ENCODE measurements at regions of chr6 and their contacts with region 1.

Region 1: DNA sequence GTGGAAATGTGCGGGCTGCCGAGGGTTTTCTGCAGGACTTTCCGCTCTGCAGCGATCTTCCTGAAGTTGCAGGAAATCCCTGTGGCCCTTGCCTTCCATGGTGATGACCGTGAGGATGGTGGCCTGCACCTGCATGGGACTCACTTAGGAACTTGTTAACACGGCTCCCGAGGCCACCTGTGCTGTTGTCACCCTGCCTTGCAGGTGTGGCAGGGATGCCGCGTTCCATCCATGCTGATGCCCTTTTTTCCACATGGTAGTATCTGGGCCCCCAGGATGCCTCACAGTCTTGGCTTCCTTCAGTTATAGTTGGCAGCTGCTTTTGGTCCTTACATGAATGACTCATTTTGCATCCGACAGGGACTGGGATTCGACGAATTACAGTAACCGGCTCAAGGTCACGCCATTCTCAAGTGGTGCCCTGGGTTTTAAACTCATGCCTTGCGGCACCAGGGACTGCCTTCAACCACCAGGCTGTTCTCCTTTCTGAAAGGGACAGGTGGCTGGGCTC is 37.2 kb downstream of the SYNJ2 start:
- DNase-seq: peak in 1 of 2 donors; percentile 73
- ATAC-seq: peak; percentile 33
- H3K4me3 ChIP-seq: no peak overlapping the region
- H3K27ac ChIP-seq: peak overlapping the region; percentile 20 to 22
- H3K4me1 ChIP-seq: no peaks in the 10 kb centered on the region
- H3K27me3 ChIP-seq: no peaks in the 10 kb centered on the region

Region 2: DNA sequence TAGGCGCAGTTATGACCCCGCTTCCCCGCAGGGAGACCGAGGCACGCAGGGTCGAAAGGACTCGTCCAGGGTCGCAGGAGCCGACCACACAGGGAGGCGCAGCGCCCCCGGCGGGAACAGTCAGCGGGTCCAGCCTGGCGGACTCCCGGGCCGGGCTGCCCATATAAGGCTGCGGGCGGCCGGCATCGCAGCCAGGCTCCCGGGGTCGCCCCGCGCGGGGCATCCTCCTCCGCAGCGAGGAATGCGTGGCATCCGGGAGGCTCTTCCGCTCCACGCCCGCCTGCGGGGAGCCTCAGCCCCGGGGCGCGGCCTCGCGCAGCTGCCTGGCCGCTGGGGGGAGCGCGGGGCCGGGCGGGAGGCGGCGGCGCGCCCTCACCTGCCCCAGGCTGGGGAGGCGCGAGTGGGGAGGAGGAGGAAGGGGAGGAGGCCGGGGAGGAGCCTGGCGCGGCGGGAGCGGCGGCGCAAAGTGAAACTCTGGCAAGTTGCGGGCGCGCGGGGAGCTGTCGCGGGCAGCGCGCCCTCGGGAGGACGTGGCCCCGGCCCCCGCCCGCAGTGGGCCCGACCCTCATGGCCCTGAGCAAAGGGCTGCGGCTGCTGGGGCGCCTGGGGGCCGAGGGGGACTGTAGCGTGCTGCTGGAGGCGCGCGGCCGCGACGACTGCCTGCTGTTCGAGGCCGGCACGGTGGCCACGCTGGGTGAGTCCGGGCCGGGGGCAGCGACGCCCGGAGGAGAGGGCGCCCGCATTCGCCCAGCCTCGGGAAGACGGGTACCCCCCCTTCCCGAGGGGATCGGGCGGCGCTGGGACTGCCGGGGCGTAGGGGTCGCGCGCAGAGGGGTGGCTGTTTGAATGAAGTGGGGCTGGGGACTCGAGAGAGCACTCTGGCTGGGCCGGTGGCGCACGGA is 37.3 kb before region 1 on chr6 and contains the start of gene SYNJ2:
- intact Hi-C with region 1: loop called in 1 of 2 experiments (anchors 5 kb)
- DNase-seq: peak; percentile 85 to 94
- ATAC-seq: peak; percentile 85
- H3K4me3 ChIP-seq: peak within 1 kb of the TSS; percentile 93 to 95
- H3K27ac ChIP-seq: peak within 1 kb of the TSS in 1 of 2 donors; percentile 52
- H3K4me1 ChIP-seq: no peaks in the 10 kb centered on the region
- H3K27me3 ChIP-seq: no peaks in the 10 kb centered on the region
- total RNA-seq, gene SYNJ2: 26.8 to 38.7 TPM